IMR-90 (cell line): ENCODE measurements at regions of chr22 and their contacts with region 1.

Region 1: DNA sequence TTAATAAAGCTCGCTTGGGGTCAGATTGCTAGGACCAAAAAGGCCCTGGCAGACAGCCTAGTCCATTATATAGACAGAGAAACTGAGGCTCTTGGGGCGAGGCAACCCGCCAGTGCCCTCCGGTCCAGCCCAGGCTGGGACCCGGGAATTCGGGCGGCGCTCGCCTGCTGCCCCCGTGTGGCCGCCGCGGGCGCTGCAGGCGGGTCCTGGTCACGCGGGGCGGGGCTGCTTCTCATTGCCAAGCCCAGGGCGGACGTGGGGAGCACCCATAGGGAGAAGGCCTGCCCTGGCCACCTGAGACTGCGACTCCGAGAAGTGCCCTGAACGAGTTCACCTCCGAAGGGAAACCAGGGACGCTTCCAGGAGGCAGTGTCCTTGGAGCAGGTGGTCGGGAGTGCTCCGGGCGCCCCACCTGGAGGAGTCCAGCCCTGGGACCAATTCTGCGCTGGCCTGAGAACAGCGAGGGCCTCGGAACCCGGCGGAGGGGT is 36.0 kb upstream of the CSNK1E start:
- DNase-seq: peak; percentile 27
- ATAC-seq: peak; percentile 97
- H3K4me3 ChIP-seq: no peak overlapping the region
- H3K27ac ChIP-seq: no peak overlapping the region
- H3K4me1 ChIP-seq: no peaks in the 10 kb centered on the region
- H3K27me3 ChIP-seq: no peaks in the 10 kb centered on the region
- CTCF ChIP-seq: peak; percentile 96
- POLR2A ChIP-seq: no peak
- RAD21 ChIP-seq: peak; percentile 95

Region 2: GRCh38 chr22:38051900-38052862 is 301.0 kb before region 1 on chr22:
- CTCF ChIA-PET with region 1: interaction called, 3 read pairs
- POLR2A ChIA-PET with region 1: no interaction called
- dilution Hi-C with region 1: no loop called
- in situ Hi-C with region 1: loop called (anchors 5 kb)
- intact Hi-C with region 1: loop called (anchors 1 kb)
- DNase-seq: peak; percentile 65
- ATAC-seq: peak; percentile 83
- H3K4me3 ChIP-seq: no peak overlapping the region
- H3K27ac ChIP-seq: no peak overlapping the region
- H3K4me1 ChIP-seq: peaks cover 3% of the 10 kb centered on the region; the same call in 1 of the 2 replicates
- H3K27me3 ChIP-seq: peaks cover 5% of the 10 kb centered on the region; the same call in 1 of the 2 replicates
- CTCF ChIP-seq: peak; percentile 85
- POLR2A ChIP-seq: no peak
- RAD21 ChIP-seq: peak; percentile 89

Region 3: DNA sequence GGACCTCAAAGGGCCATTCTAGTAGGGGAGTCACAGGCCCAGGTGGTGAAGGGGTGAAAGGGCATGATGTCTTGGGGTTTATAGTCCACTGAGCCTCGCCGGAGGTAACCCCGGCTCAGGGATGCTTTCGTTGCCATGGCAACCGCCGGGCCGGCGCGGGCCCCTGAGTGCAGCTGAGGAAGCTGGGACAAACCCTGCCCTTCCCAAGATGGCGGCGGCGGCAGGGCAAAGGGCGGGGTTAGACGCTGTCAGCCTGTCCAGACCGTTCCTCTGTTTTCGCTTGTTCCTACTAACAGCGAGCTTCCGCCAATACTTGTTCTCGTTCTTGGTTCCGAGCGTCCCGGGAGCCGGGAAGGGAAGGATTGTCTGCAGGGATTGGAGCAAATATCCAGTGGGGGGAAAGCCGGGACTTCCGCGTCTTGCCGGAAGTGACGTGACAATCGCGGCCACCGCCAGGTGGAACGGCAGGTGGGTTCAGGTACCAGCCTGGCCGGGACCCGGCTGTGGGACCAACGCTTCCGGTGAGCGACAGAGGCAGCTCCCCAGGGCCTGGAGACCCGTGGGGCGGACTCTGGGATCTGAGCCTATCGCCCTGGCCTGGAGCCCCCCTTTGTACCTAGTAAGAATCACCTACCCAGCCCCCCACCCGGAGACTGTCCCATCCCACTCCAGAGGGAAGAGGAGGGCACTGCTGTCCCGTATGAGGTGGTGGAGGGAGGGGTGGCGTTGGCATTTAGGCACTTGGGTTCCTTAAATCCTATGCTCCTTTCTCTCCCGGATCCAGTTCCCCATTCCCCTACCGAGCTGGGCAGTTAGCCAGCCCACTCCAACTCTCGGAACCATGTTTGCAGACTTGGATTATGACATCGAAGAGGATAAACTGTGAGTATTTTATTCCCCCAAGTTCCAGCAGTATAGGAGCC is 296.0 kb before region 1 on chr22 and contains the start of gene PICK1:
- CTCF ChIA-PET with region 1: interaction called, 3 read pairs
- POLR2A ChIA-PET with region 1: no interaction called
- dilution Hi-C with region 1: no loop called
- in situ Hi-C with region 1: loop called (anchors 5 kb)
- intact Hi-C with region 1: loop called (anchors 1 kb)
- DNase-seq: peak; percentile 91
- ATAC-seq: peak; percentile 93
- H3K4me3 ChIP-seq: peak within 1 kb of the TSS; percentile 56
- H3K27ac ChIP-seq: peak within 1 kb of the TSS; percentile 80
- H3K4me1 ChIP-seq: peaks cover 5% of the 10 kb centered on the region
- H3K27me3 ChIP-seq: no peaks in the 10 kb centered on the region
- CTCF ChIP-seq: no peak
- POLR2A ChIP-seq: no peak
- RAD21 ChIP-seq: no peak
- total RNA-seq, gene PICK1: 14.4 and 16.5 TPM in 2 replicates

Region 4: GRCh38 chr22:38069372-38070249 is 283.6 kb before region 1 on chr22:
- CTCF ChIA-PET with region 1: no interaction called
- POLR2A ChIA-PET with region 1: no interaction called
- dilution Hi-C with region 1: no loop called
- in situ Hi-C with region 1: no loop called
- intact Hi-C with region 1: loop called (anchors 5 kb)
- DNase-seq: peak; percentile 29
- ATAC-seq: peak; percentile 59; the same call in 1 of the 2 replicates
- H3K4me3 ChIP-seq: no peak overlapping the region
- H3K27ac ChIP-seq: no peak overlapping the region
- H3K4me1 ChIP-seq: no peaks in the 10 kb centered on the region
- H3K27me3 ChIP-seq: no peaks in the 10 kb centered on the region
- CTCF ChIP-seq: peak; percentile 53
- POLR2A ChIP-seq: no peak
- RAD21 ChIP-seq: peak; percentile 68

Region 5: DNA sequence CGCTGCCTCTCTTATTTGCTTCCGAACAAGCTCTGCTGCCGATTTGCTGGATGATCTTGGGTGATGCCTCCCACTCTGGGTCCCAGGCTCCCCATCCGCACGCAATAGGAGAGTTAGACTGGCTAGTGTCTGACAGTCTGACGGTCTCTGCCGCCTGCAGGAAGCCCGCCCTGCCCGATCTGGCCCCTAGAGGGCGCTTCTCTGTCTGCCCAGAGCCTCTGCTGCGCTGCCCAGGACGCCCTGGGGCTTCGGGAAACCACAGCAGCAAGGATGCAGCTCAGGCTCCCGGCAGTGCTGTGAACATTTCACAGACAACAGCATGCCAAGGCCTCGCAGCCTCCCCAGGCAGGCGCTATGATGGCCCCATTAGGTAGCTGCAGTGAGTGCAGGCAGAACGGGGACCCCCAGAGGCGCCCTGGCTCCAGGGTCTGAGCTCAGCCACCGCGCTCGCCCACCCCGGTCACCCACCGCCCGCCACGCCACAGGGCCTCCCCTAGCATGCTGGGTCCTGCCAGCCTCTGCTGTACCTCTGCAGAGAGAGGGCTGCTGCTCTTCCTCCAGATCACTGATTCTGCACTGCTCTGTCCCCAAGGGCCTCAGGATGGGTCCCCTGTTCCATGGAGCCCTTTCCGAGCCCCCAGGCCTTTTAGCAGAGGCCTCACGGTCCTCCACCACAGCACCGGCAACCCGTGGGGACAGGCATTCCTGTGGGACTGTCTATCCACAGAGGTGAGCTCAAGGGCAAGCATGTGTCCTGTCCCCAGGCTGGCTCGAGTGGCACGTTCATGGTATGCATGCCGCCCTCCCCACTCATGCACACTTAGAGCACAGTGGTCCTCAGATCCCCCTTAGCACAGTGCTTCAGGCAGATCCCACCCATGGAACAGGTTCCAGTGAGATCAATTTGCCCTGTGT is 238.4 kb before region 1 on chr22:
- CTCF ChIA-PET with region 1: interaction called, 4 read pairs
- POLR2A ChIA-PET with region 1: no interaction called
- dilution Hi-C with region 1: no loop called
- in situ Hi-C with region 1: no loop called
- intact Hi-C with region 1: loop called (anchors 1 kb)
- DNase-seq: peak; percentile 78
- ATAC-seq: peak; percentile 99
- H3K4me3 ChIP-seq: no peak overlapping the region
- H3K27ac ChIP-seq: no peak overlapping the region
- H3K4me1 ChIP-seq: no peaks in the 10 kb centered on the region; the same call in 1 of the 2 replicates
- H3K27me3 ChIP-seq: peaks cover 2% of the 10 kb centered on the region; the same call in 1 of the 2 replicates
- CTCF ChIP-seq: peak; percentile 96
- POLR2A ChIP-seq: no peak
- RAD21 ChIP-seq: peak; percentile 91

Region 6: GRCh38 chr22:38569972-38570778 is 217.0 kb after region 1 on chr22 and contains the start of gene DMC1:
- CTCF ChIA-PET with region 1: no interaction called
- POLR2A ChIA-PET with region 1: no interaction called
- dilution Hi-C with region 1: no loop called
- in situ Hi-C with region 1: no loop called
- intact Hi-C with region 1: loop called (anchors 5 kb)
- DNase-seq: peak; percentile 69
- ATAC-seq: peak; percentile 94
- H3K4me3 ChIP-seq: peak within 1 kb of the TSS; percentile 99
- H3K27ac ChIP-seq: peak within 1 kb of the TSS; percentile 73; the same call in 1 of the 2 replicates
- H3K4me1 ChIP-seq: no peaks in the 10 kb centered on the region; the same call in 1 of the 2 replicates
- H3K27me3 ChIP-seq: 0 out of 2 replicates have a peak, but pooled peaks cover 2% of the 10 kb centered on the region
- CTCF ChIP-seq: no peak
- POLR2A ChIP-seq: no peak
- RAD21 ChIP-seq: no peak
- total RNA-seq, gene DMC1: 0.18 and 1.1 TPM in 2 replicates